Mammary epithelial cell (primary cell): ENCODE measurements at regions of chr17 and their contacts with region 1.

Region 1: GRCh38 chr17:40177275-40177874 is at the start of gene RAPGEFL1:
- DNase-seq: peak; percentile 73
- H3K4me3 ChIP-seq: peak within 1 kb of the TSS; percentile 60 to 80 (median 65)
- H3K27ac ChIP-seq: peak within 1 kb of the TSS; percentile 85
- H3K4me1 ChIP-seq: peaks cover 47% of the 10 kb centered on the region
- H3K27me3 ChIP-seq: no peaks in the 10 kb centered on the region
- CTCF ChIP-seq: no peak
- total RNA-seq, gene RAPGEFL1: 19.7 to 25.2 TPM

Region 2: DNA sequence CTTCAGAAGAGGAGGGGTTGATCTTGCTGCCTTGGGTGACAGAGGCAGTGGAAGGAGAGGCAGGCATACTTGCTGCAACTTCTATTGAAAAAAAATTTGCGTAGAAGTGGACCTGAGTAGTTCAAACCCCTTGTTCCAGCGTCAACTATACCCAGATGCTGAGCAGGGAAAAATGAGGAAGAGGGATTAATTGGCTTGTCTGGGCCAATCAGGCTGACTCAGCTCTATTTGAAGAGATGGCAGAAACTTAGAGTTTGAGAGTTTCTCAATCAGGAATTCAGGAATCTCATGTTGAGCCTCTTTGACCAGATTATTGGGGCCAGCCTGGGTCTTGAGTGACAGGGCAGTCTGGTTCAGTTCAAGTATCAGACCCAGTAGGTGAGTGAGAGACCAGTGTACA is 19.4 kb before region 1 on chr17:
- CTCF ChIA-PET with region 1: no interaction called
- dilution Hi-C with region 1: no loop called
- in situ Hi-C with region 1: no loop called
- intact Hi-C with region 1: no loop called
- DNase-seq: no peak
- H3K4me3 ChIP-seq: no peak overlapping the region
- H3K27ac ChIP-seq: no peak overlapping the region
- H3K4me1 ChIP-seq: no peaks in the 10 kb centered on the region
- H3K27me3 ChIP-seq: no peaks in the 10 kb centered on the region
- CTCF ChIP-seq: no peak

Region 3: DNA sequence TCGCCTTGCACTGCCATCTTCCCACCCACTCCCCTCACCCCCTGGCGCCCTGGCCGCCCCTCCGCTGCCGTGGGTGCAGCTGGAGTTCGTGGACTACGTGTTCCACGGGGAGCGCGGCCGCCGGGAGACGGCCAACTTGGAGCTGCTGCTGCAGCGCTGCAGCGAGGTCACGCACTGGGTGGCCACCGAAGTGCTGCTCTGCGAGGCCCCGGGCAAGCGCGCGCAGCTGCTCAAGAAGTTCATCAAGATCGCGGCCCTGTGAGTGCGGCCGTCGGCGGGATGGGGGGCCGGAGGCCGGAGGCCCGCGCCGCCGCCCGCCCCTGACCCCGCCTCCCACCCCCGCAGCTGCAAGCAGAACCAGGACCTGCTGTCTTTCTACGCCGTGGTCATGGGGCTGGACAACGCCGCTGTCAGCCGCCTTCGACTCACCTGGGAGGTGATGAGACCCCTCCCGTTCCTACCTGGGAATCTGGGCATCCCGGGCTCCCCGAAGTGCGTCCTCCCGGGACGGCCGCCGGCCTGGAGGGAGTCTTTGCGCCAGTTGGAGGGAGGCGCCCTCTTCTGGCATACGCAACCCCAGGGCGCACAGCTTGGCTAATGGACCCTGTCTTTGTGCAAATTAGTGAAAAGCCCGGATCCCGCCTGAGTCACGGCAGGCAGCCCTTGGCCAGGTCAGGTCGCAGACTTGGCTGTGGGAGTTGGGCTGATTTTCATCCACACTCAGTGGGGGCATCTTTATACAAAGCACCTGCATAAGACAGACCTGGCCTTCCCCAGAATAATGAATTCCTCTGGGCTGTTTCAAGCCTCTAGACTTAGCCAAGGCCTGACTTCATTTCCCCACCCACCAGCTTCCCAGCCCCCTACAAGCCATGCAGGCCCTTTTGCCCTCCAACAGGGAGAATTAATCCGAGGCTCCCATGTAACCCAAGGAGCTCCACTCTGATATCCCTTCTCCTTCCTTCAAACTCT is 14.1 kb after region 1 on chr17:
- CTCF ChIA-PET with region 1: interaction called, 29 read pairs
- dilution Hi-C with region 1: no loop called
- in situ Hi-C with region 1: no loop called
- intact Hi-C with region 1: no loop called
- DNase-seq: peak; percentile 75
- H3K4me3 ChIP-seq: peak overlapping the region in 2 of 3 experiments; percentile 37 to 41
- H3K27ac ChIP-seq: no peak overlapping the region
- H3K4me1 ChIP-seq: peaks cover 24% of the 10 kb centered on the region
- H3K27me3 ChIP-seq: no peaks in the 10 kb centered on the region
- CTCF ChIP-seq: peak; percentile 66 to 81